IMR-90 (cell line): ENCODE measurements at regions of chr9 and their contacts with region 1.

Region 1: GRCh38 chr9:93108291-93109041 is 12.4 kb downstream of the CARD19 start:
- DNase-seq: no peak
- ATAC-seq: no peak
- H3K4me3 ChIP-seq: no peak overlapping the region
- H3K27ac ChIP-seq: no peak overlapping the region
- H3K4me1 ChIP-seq: no peaks in the 10 kb centered on the region
- H3K27me3 ChIP-seq: no peaks in the 10 kb centered on the region
- CTCF ChIP-seq: no peak
- POLR2A ChIP-seq: no peak
- RAD21 ChIP-seq: no peak

Region 2: DNA sequence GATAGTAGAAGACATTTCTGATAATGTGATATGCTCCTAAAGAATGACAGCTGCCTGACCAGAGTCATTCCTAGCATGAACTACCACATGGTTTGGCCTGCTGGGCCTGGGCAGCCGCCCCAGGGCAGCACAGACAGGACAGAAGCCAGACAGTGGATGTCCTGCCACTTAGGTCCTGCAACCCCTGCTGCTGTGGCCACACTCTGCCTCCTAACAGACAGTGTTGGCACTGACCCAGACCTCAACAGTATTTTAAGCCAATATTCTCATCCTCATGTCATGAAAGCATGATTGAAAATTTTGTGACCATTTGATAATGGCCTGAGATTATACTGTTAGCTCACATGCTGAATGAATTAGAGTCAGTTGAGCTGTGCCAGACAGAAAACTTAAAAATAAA is 766.9 kb before region 1 on chr9:
- CTCF ChIA-PET with region 1: no interaction called
- POLR2A ChIA-PET with region 1: no interaction called
- dilution Hi-C with region 1: no loop called
- in situ Hi-C with region 1: no loop called
- intact Hi-C with region 1: no loop called
- DNase-seq: no peak
- ATAC-seq: no peak
- H3K4me3 ChIP-seq: no peak overlapping the region
- H3K27ac ChIP-seq: no peak overlapping the region
- H3K4me1 ChIP-seq: peaks cover 2% of the 10 kb centered on the region; the same call in 1 of the 2 replicates
- H3K27me3 ChIP-seq: no peaks in the 10 kb centered on the region
- CTCF ChIP-seq: no peak
- POLR2A ChIP-seq: no peak
- RAD21 ChIP-seq: no peak

Region 3: DNA sequence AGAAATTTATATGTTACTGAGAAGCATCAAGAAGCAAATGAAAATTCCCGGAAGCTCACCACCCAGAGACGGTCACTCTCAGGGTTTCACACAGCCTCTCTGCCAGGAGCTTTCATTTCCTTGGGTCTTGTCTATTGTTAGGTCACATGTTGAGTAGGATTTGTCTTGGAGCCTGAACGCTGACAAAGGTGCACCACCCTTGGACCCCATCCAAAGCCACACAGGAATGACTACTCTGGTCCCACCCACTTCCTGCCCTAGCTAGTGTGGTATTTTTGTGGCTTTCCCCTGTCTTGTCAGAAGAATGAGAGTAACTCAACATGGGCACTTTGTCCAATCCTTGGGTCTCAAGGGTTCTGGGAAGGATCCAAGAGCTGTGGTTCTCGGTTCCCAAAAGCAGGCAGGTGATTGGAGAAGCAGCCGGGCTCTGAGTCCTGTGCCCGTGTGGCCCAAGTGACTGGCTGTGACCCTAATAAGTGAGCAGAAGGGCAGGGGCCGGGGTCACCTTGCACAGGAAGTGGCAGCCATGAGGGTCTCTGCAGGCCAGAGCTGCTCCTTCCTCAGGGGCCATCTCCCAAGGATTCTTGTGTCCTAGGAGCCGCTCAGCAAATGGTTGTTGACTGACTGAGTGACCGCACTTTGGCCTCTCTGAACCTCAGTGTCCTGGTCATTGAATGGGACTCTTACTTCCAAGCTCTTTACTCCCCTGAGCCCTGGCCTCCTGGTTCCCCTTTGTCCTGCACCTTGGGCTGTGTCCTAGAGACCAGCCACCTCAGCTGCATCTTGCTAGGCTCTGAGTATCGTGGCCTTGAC is 154.2 kb before region 1 on chr9:
- CTCF ChIA-PET with region 1: no interaction called
- POLR2A ChIA-PET with region 1: no interaction called
- dilution Hi-C with region 1: no loop called
- in situ Hi-C with region 1: no loop called
- intact Hi-C with region 1: loop called (anchors 1 kb)
- DNase-seq: no peak
- ATAC-seq: no peak
- H3K4me3 ChIP-seq: no peak overlapping the region
- H3K27ac ChIP-seq: no peak overlapping the region
- H3K4me1 ChIP-seq: no peaks in the 10 kb centered on the region
- H3K27me3 ChIP-seq: peaks cover 4% of the 10 kb centered on the region
- CTCF ChIP-seq: no peak
- POLR2A ChIP-seq: no peak
- RAD21 ChIP-seq: no peak

Region 4: GRCh38 chr9:93003552-93004407 is 104.7 kb before region 1 on chr9:
- CTCF ChIA-PET with region 1: interaction called, 3 read pairs
- POLR2A ChIA-PET with region 1: no interaction called
- dilution Hi-C with region 1: no loop called
- in situ Hi-C with region 1: no loop called
- intact Hi-C with region 1: loop called (anchors 1 kb)
- DNase-seq: peak; percentile 22
- ATAC-seq: peak; percentile 80
- H3K4me3 ChIP-seq: no peak overlapping the region
- H3K27ac ChIP-seq: no peak overlapping the region
- H3K4me1 ChIP-seq: no peaks in the 10 kb centered on the region
- H3K27me3 ChIP-seq: peaks cover 8% of the 10 kb centered on the region; the same call in 1 of the 2 replicates
- CTCF ChIP-seq: peak; percentile 64
- POLR2A ChIP-seq: no peak
- RAD21 ChIP-seq: peak; percentile 66

Region 5: DNA sequence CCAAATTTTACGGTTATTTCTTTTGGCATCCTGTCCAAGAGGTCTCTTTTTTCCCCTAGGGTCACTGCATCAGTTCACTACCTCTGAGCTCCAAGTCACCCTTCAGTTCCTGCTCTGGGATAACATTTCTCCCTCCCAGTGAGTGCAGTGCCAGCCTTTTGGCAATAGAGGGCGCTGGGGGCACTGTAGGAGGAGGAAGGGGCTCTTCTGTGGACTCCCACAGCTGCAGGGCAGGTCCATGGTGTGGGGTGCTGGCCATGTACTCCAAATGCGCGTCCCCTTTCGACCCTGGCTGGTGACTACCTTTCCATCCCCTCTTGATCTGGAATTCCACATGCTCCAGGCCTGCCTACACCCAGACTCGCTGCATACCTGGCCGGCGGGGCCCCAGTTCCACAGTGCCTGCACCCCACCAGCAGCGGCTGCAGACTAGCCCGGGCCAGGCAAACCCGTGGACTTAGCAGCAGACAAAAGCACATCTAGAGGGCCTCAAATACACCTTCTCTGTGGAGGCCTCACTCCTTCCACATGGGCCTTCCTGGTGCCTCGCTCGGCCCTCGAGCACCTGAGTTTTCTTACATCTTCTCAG is 45.9 kb after region 1 on chr9:
- CTCF ChIA-PET with region 1: no interaction called
- POLR2A ChIA-PET with region 1: no interaction called
- dilution Hi-C with region 1: no loop called
- in situ Hi-C with region 1: no loop called
- intact Hi-C with region 1: loop called (anchors 5 kb)
- DNase-seq: no peak
- ATAC-seq: peak; percentile 57
- H3K4me3 ChIP-seq: no peak overlapping the region
- H3K27ac ChIP-seq: no peak overlapping the region
- H3K4me1 ChIP-seq: no peaks in the 10 kb centered on the region
- H3K27me3 ChIP-seq: no peaks in the 10 kb centered on the region
- CTCF ChIP-seq: peak; percentile 44
- POLR2A ChIP-seq: no peak
- RAD21 ChIP-seq: peak; percentile 32; the same call in 1 of the 2 replicates

Region 6: GRCh38 chr9:93159601-93160471 is 51.4 kb after region 1 on chr9:
- CTCF ChIA-PET with region 1: no interaction called
- POLR2A ChIA-PET with region 1: no interaction called
- dilution Hi-C with region 1: no loop called
- in situ Hi-C with region 1: no loop called
- intact Hi-C with region 1: loop called (anchors 2 kb)
- DNase-seq: peak; percentile 77
- ATAC-seq: peak; percentile 99
- H3K4me3 ChIP-seq: no peak overlapping the region
- H3K27ac ChIP-seq: no peak overlapping the region; the same call in 1 of the 2 replicates
- H3K4me1 ChIP-seq: peaks cover 3% of the 10 kb centered on the region; the same call in 1 of the 2 replicates
- H3K27me3 ChIP-seq: peaks cover 4% of the 10 kb centered on the region
- CTCF ChIP-seq: peak; percentile 97
- POLR2A ChIP-seq: no peak
- RAD21 ChIP-seq: peak; percentile 94